ENCODE measurements at regions of chr11 and their contacts with region 1.

Region 1: GRCh38 chr11:116787786-116788486 is at the start of gene ZPR1:
- DNase-seq: peak; percentile 90
- H3K4me3 Mint-ChIP-seq: peak within 1 kb of the TSS; percentile 95
- H3K27ac Mint-ChIP-seq: peak within 1 kb of the TSS; percentile 91
- H3K4me1 Mint-ChIP-seq: peaks cover 54% of the 10 kb centered on the region
- H3K27me3 Mint-ChIP-seq: no peaks in the 10 kb centered on the region
- total RNA-seq, gene ZPR1: 101 to 102 TPM

Region 2: DNA sequence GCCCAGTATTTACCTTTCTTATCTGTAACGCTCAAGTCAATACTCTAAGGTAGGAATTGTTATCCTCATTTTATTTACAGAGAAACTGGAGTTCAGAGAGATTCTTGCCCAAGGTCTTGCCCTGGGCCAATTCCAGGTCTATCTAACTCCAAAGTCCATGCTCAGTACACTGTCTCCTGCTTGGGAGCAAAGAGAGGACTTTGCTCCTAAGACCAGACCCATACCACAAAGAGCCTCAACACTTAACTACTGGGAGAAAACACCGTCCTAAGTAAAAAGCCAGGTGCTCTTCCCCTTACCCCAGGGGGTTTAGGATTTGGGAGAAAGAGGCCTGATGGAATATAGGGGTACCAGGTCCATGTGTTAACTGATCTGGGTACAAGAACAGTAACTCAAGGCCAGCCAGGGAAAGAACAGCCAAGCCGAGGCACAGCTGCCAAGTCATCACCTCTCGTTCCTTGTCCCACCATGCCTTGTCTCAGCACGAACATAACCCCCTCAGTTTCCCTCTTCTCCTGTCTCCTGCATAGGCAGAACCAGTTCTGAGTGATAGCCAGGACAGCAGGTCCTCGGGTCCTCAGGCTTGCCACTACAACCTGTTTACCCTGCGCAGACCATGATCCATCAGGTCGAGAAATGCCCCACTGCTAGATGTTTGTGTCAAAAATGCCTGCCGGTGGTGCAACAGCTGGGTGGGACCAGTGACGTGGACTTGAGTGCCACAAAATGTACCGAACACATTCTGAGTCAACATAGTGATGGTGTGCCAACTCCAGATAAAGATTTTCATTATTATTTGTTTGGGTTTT is 20.7 kb after region 1 on chr11:
- CTCF ChIA-PET with region 1: interaction called, 20 read pairs
- POLR2A ChIA-PET with region 1: no interaction called
- intact Hi-C with region 1: no loop called
- DNase-seq: no peak
- H3K4me3 Mint-ChIP-seq: no peak overlapping the region
- H3K27ac Mint-ChIP-seq: no peak overlapping the region
- H3K4me1 Mint-ChIP-seq: no peaks in the 10 kb centered on the region
- H3K27me3 Mint-ChIP-seq: no peaks in the 10 kb centered on the region

Region 3: GRCh38 chr11:116835791-116836631 is 48.1 kb after region 1 on chr11:
- CTCF ChIA-PET with region 1: interaction called, 187 read pairs
- POLR2A ChIA-PET with region 1: interaction called, 9 read pairs
- intact Hi-C with region 1: loop called (anchors 1 kb)
- DNase-seq: peak; percentile 88
- H3K4me3 Mint-ChIP-seq: peak overlapping the region; percentile 63
- H3K27ac Mint-ChIP-seq: no peak overlapping the region
- H3K4me1 Mint-ChIP-seq: peaks cover 12% of the 10 kb centered on the region
- H3K27me3 Mint-ChIP-seq: no peaks in the 10 kb centered on the region

Region 4: GRCh38 chr11:117098269-117099232 is 310.6 kb after region 1 on chr11 and contains the start of gene SIK3:
- CTCF ChIA-PET with region 1: interaction called, 147 read pairs
- POLR2A ChIA-PET with region 1: interaction called, 8 read pairs
- intact Hi-C with region 1: loop called (anchors 5 kb)
- DNase-seq: peak; percentile 94
- H3K4me3 Mint-ChIP-seq: peak within 1 kb of the TSS; percentile 88
- H3K27ac Mint-ChIP-seq: peak within 1 kb of the TSS; percentile 91
- H3K4me1 Mint-ChIP-seq: peaks cover 43% of the 10 kb centered on the region
- H3K27me3 Mint-ChIP-seq: no peaks in the 10 kb centered on the region
- total RNA-seq, gene SIK3: 26.1 to 26.2 TPM

Region 5: GRCh38 chr11:117143871-117144476 is 356.0 kb after region 1 on chr11 and contains the start of gene PAFAH1B2:
- CTCF ChIA-PET with region 1: interaction called, 16 read pairs
- POLR2A ChIA-PET with region 1: interaction called, 3 read pairs
- intact Hi-C with region 1: no loop called
- DNase-seq: peak; percentile 97
- H3K4me3 Mint-ChIP-seq: peak within 1 kb of the TSS; percentile 96
- H3K27ac Mint-ChIP-seq: peak within 1 kb of the TSS; percentile 90
- H3K4me1 Mint-ChIP-seq: peaks cover 37% of the 10 kb centered on the region
- H3K27me3 Mint-ChIP-seq: no peaks in the 10 kb centered on the region
- total RNA-seq, gene PAFAH1B2: 61.3 to 61.5 TPM

Region 6: GRCh38 chr11:117232092-117232878 is 444.3 kb after region 1 on chr11 and contains the start of gene RNF214:
- CTCF ChIA-PET with region 1: interaction called, 21 read pairs
- POLR2A ChIA-PET with region 1: no interaction called
- intact Hi-C with region 1: loop called (anchors 5 kb)
- DNase-seq: peak; percentile 83
- H3K4me3 Mint-ChIP-seq: peak within 1 kb of the TSS; percentile 99
- H3K27ac Mint-ChIP-seq: peak within 1 kb of the TSS; percentile 98
- H3K4me1 Mint-ChIP-seq: peaks cover 37% of the 10 kb centered on the region
- H3K27me3 Mint-ChIP-seq: no peaks in the 10 kb centered on the region
- total RNA-seq, gene RNF214: 16.9 to 18.3 TPM

Measured in activated CD4-positive, alpha-beta memory T cell treated with anti-CD3 and anti-CD28 coated beads for 36 hours (primary cell).